ENCODE measurements at regions of chr6 and their contacts with region 1.

Region 1: DNA sequence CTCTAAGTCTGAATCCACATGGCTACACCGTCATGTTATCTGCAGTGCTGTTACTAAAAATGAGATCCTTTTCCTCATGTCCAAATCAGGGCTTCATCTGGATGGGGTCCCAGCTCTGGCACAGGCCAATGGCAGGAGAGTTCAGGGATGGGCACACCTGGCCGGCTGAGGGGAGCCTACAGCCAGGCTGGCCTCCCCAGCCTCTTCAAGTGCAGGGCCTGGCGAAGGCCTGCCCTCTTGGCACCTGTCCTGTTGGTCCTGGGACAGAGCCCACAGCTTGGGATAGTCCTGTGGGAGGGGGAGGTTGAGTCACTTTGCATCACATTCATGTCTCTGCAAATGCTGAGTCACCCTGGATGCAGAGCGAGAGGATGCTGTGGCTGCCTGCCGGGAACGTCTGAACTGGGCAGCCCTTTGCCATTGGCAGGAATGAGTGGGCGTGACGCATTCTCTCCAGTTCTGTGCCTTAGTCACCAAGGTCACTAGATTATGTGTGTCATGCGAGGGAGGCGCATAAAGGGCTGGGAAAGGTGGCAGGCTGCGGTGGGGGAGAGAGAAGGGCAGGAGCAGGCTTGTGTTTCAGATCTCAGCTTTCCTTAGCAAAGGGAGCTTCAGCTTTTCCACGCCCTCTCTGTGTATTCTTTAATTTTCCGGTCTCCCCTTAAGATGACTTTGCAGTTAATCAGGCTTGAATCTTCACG is 223.2 kb upstream of the ECI2 start:
- DNase-seq: peak; percentile 93
- H3K4me3 ChIP-seq: peak overlapping the region in 1 of 4 donors; percentile 5
- H3K27ac ChIP-seq: peak overlapping the region; percentile 76 to 86 (median 81)
- H3K4me1 ChIP-seq: peaks cover 0 to 14% (median 12%) of the 10 kb centered on the region in 4 donors
- H3K27me3 ChIP-seq: no peaks in the 10 kb centered on the region
- CTCF ChIP-seq: no peak
- EP300 ChIP-seq: peak in 2 of 4 donors; percentile 43 to 91
- POLR2A ChIP-seq: no peak

Region 2: DNA sequence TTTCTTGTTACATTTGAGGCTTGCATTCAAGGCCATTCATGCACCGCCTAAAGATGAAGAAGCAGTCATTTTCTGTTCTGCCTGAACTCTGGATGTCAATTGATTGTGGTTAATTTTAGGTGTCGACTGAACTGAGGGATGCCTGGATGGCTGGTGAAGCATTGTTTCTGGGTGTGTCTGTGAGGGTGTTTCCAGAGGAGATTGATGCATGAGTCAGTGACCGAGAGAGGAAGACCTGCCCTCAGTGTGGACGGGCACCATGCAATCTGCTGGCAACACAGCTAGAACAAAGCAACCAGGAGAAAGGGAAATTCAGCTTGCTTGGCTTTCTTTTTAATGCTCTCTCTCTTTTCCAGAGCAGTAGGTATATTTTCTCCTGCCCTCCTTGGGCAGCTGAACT is 59.1 kb before region 1 on chr6:
- intact Hi-C with region 1: no loop called
- DNase-seq: no peak
- H3K4me3 ChIP-seq: no peak overlapping the region
- H3K27ac ChIP-seq: no peak overlapping the region
- H3K4me1 ChIP-seq: no peaks in the 10 kb centered on the region
- H3K27me3 ChIP-seq: no peaks in the 10 kb centered on the region
- CTCF ChIP-seq: no peak
- EP300 ChIP-seq: no peak
- POLR2A ChIP-seq: no peak

Region 3: GRCh38 chr6:4336778-4337442 is 21.7 kb before region 1 on chr6:
- intact Hi-C with region 1: no loop called
- DNase-seq: peak; percentile 77
- H3K4me3 ChIP-seq: no peak overlapping the region
- H3K27ac ChIP-seq: peak overlapping the region in 3 of 4 donors; percentile 22 to 69 (median 59)
- H3K4me1 ChIP-seq: peaks cover 0 to 12% (median 2%) of the 10 kb centered on the region in 4 donors
- H3K27me3 ChIP-seq: no peaks in the 10 kb centered on the region
- CTCF ChIP-seq: no peak
- EP300 ChIP-seq: peak in 3 of 4 donors; percentile 58 to 82 (median 69)
- POLR2A ChIP-seq: no peak

Region 4: GRCh38 chr6:4610256-4610655 is 251.7 kb after region 1 on chr6:
- intact Hi-C with region 1: loop called (anchors 10 kb)
- DNase-seq: peak; percentile 92
- H3K4me3 ChIP-seq: no peak overlapping the region
- H3K27ac ChIP-seq: peak overlapping the region in 2 of 4 donors; percentile 52 to 59
- H3K4me1 ChIP-seq: peaks cover 0 to 44% (median 38%) of the 10 kb centered on the region in 4 donors
- H3K27me3 ChIP-seq: no peaks in the 10 kb centered on the region
- CTCF ChIP-seq: no peak
- EP300 ChIP-seq: peak in 1 of 4 donors; percentile 28
- POLR2A ChIP-seq: no peak